Activated CD8-positive, alpha-beta T cell treated with anti-CD3 and anti-CD28 coated beads, Interleukin-2, amount 10 ng/mL, durations not matched to agents 7 days and 5 days (primary cell): ENCODE measurements at regions of chr2 and their contacts with region 1.

Region 1: DNA sequence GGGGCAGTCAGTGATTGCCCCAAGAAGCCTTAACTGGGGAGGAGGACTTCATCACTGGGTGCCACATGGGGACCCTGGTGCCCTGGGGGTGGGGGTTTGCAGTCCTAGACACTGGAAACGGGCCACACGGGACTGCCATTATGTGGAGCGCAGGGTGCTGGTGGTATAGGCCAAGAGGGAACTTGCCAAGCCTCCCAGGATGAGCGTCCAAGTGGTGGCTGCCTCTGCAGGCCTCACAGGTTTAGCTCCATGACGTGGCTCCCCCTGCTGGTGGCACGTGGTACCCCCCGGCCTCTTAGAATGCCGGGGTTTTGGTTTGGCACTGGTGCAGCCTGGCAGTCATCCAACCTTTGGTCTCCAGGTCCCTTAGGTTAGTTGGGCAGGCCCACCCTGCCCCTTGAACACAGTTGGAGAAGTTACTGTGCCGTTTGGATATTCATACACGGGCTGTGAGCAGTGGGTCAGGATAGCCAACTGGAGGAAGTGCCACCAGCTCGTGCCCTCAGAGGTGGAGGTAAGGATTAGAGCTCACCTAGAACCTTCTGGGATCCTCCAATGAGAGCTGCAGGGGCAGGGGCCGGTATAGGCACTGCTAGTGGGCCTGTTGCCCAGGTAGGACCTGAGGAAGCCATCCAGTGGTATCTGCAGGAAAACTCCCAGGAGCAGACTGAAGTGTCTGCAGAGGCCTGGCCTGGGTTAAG is 5.6 kb downstream of the PTMA start:
- DNase-seq: peak; percentile 92
- ATAC-seq: peak; percentile 18
- H3K4me3 Mint-ChIP-seq: peak overlapping the region; percentile 63
- H3K27ac Mint-ChIP-seq: peak overlapping the region; percentile 94
- H3K4me1 Mint-ChIP-seq: peaks cover 35% of the 10 kb centered on the region
- H3K27me3 Mint-ChIP-seq: no peaks in the 10 kb centered on the region

Region 2: DNA sequence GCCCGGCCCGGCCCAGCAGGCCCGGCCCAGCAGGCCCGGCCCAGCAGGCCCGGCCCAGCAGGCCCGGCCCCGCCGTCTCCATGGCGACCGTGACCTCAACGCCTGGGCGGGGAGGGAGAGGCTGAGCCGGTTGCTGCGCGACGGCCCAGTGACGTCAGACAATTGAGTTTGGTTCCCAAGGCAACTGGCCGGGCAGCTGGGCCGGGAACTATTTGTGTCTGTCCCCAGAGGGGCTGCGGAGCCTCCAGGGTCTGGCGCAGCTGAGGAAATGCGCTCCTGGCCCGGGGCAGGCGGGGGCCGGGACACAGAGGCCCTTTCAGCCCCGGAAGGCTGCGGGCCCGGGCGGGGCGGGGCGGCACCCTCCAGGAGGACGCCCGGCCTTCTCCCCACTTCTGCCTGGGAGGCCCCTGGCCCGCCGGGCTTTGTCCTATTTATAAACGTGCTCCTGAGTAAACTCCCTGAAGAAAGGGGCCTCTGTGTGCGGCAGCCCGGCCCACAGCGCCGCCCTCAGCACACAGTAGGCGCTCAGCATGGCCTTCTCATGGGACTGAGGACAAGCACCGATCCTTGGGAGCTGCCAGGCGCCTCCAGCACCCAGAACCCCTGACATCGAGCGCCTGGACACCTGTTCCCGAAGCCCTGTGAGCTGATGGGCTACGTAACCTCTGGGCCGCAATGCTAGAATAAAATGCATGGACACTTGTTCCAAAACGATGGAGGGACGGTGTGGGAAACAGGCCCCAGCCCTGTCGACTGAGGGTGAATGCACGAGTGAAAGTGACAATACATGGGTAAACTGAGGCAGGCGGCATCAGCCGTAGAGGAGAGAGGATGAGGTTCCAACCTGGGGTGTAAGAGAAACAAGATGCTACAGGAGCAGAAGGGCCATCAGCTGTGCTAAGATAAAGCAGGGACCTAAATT is 108.9 kb before region 1 on chr2:
- CTCF ChIA-PET with region 1: interaction called, 267 read pairs
- POLR2A ChIA-PET with region 1: interaction called, 75 read pairs
- DNase-seq: peak; percentile 96
- ATAC-seq: peak; percentile 87
- H3K4me3 Mint-ChIP-seq: peak overlapping the region; percentile 42
- H3K27ac Mint-ChIP-seq: peak overlapping the region; percentile 2
- H3K4me1 Mint-ChIP-seq: peaks cover 19% of the 10 kb centered on the region
- H3K27me3 Mint-ChIP-seq: peaks cover 9% of the 10 kb centered on the region

Region 3: GRCh38 chr2:231621129-231621879 is 92.6 kb before region 1 on chr2:
- CTCF ChIA-PET with region 1: interaction called, 11 read pairs
- POLR2A ChIA-PET with region 1: interaction called, 4 read pairs
- DNase-seq: no peak
- ATAC-seq: no peak
- H3K4me3 Mint-ChIP-seq: no peak overlapping the region
- H3K27ac Mint-ChIP-seq: no peak overlapping the region
- H3K4me1 Mint-ChIP-seq: peaks cover 37% of the 10 kb centered on the region
- H3K27me3 Mint-ChIP-seq: no peaks in the 10 kb centered on the region

Region 4: GRCh38 chr2:231648587-231649174 is 65.2 kb before region 1 on chr2:
- CTCF ChIA-PET with region 1: interaction called, 25 read pairs
- POLR2A ChIA-PET with region 1: no interaction called
- DNase-seq: peak; percentile 67
- ATAC-seq: peak; percentile 86
- H3K4me3 Mint-ChIP-seq: no peak overlapping the region
- H3K27ac Mint-ChIP-seq: no peak overlapping the region
- H3K4me1 Mint-ChIP-seq: peaks cover 5% of the 10 kb centered on the region
- H3K27me3 Mint-ChIP-seq: no peaks in the 10 kb centered on the region

Region 5: DNA sequence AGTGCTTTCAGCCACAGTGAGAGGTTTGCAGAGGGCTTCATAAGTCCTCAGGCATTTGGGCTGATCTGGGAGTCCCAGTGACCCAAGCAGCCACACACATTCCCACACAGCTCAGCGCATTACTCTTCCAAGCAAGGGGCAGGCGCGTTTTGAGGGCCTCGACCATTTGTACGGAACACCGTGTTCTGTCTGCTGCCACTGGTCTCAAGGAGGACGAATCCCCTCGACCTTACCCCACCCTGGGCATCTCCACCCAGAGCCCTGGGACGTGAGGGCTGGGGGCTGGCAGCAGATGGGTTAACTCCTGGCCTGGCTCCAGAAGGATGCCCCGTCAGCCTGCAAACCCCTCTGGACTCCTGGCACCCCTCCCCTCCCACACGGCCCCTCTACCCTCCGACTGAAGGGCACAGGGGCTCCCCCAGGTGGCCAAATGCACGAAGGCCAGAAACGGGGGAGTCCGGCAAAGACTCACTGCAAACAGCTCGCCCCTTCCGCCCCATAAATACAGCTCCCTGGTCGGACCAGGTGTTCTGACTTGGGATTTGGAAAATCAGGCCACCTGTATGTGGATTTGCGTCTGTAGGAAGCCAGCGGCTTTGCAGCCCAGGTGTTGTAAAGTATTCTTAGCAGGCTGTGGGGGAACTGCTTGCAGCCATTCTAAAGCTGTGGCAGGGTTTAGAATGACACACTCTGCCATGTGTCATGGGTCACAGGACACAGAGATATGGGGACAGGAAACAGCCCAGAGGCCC is 39.1 kb before region 1 on chr2:
- CTCF ChIA-PET with region 1: interaction called, 648 read pairs
- POLR2A ChIA-PET with region 1: interaction called, 67 read pairs
- DNase-seq: peak; percentile 74
- ATAC-seq: peak; percentile 73
- H3K4me3 Mint-ChIP-seq: no peak overlapping the region
- H3K27ac Mint-ChIP-seq: peak overlapping the region; percentile 57
- H3K4me1 Mint-ChIP-seq: peaks cover 36% of the 10 kb centered on the region
- H3K27me3 Mint-ChIP-seq: peaks cover 2% of the 10 kb centered on the region

Region 6: GRCh38 chr2:231761735-231762134 is 47.9 kb after region 1 on chr2:
- CTCF ChIA-PET with region 1: interaction called, 10 read pairs
- POLR2A ChIA-PET with region 1: no interaction called
- DNase-seq: no peak
- ATAC-seq: no peak
- H3K4me3 Mint-ChIP-seq: no peak overlapping the region
- H3K27ac Mint-ChIP-seq: no peak overlapping the region
- H3K4me1 Mint-ChIP-seq: peaks cover 24% of the 10 kb centered on the region
- H3K27me3 Mint-ChIP-seq: no peaks in the 10 kb centered on the region

Region 7: GRCh38 chr2:231786177-231786916 is 72.5 kb after region 1 on chr2 and contains the start of gene COPS7B:
- CTCF ChIA-PET with region 1: interaction called, 16 read pairs
- POLR2A ChIA-PET with region 1: no interaction called
- DNase-seq: peak; percentile 84
- ATAC-seq: peak; percentile 73
- H3K4me3 Mint-ChIP-seq: peak within 1 kb of the TSS; percentile 91
- H3K27ac Mint-ChIP-seq: peak within 1 kb of the TSS; percentile 84
- H3K4me1 Mint-ChIP-seq: peaks cover 51% of the 10 kb centered on the region
- H3K27me3 Mint-ChIP-seq: no peaks in the 10 kb centered on the region
- total RNA-seq, gene COPS7B: 47.5 to 47.7 TPM

Region 8: GRCh38 chr2:231900486-231900942 is 186.6 kb after region 1 on chr2:
- CTCF ChIA-PET with region 1: no interaction called
- POLR2A ChIA-PET with region 1: no interaction called
- DNase-seq: peak; percentile 64
- ATAC-seq: peak; percentile 76
- H3K4me3 Mint-ChIP-seq: no peak overlapping the region
- H3K27ac Mint-ChIP-seq: no peak overlapping the region
- H3K4me1 Mint-ChIP-seq: no peaks in the 10 kb centered on the region
- H3K27me3 Mint-ChIP-seq: peaks cover 9% of the 10 kb centered on the region

Region 9: GRCh38 chr2:232315049-232315922 is 601.4 kb after region 1 on chr2:
- CTCF ChIA-PET with region 1: no interaction called
- POLR2A ChIA-PET with region 1: no interaction called
- DNase-seq: peak; percentile 92
- ATAC-seq: peak; percentile 88
- H3K4me3 Mint-ChIP-seq: peak overlapping the region; percentile 42
- H3K27ac Mint-ChIP-seq: peak overlapping the region; percentile 96
- H3K4me1 Mint-ChIP-seq: peaks cover 92% of the 10 kb centered on the region
- H3K27me3 Mint-ChIP-seq: no peaks in the 10 kb centered on the region